ENCODE measurements at regions of chrX and their contacts with region 1.

Region 1: DNA sequence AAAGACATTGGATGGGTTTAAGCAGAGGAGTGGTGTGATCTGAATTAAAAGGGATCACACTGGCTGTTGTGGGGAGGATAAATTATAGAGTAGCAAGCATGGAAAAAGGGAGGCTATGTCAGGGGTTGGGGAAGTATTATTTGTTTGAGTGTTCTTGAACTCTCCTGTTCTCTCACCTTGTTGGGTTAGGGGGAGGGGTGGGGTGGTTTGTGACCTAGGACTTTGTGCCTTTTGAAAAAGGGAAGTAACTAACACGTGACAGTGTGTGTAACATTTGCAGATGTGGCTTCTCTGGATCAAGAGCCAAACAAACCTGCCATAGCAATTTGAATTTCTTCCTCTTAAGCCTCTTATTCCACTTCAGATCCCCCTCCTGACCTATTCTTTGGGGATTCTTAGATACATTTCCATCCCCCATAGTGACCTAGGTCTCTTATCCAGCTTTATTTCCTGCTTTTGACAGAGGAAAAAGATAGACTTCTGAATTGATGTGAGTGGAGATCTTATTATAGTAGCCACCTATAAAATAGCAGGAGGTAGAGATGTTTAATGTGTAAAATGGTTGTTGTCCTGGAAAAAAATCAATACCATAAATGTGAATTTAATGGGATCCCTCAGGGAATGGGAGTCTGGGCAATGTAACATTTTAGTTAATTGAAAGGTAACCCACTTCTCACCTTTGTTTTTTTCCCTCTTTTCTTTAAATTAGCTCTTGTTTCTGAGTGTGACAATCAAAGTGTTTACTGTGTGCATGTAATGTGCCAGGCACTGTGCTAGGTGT is 120.4 kb downstream of the CT47B1 start:
- DNase-seq: peak; percentile 82
- ATAC-seq: peak; percentile 79
- H3K4me3 ChIP-seq: peak overlapping the region in 1 of 5 experiments; percentile 13
- H3K4me3 Mint-ChIP-seq: peak overlapping the region; percentile 47
- H3K27ac ChIP-seq: peak overlapping the region; percentile 87 to 88
- H3K27ac Mint-ChIP-seq: peak overlapping the region; percentile 86
- H3K4me1 ChIP-seq: peaks cover 82 to 83% of the 10 kb centered on the region in 2 donors
- H3K4me1 Mint-ChIP-seq: peaks cover 89% of the 10 kb centered on the region
- H3K27me3 ChIP-seq: no peaks in the 10 kb centered on the region
- H3K27me3 Mint-ChIP-seq: no peaks in the 10 kb centered on the region
- CTCF ChIP-seq: no peak

Region 2: DNA sequence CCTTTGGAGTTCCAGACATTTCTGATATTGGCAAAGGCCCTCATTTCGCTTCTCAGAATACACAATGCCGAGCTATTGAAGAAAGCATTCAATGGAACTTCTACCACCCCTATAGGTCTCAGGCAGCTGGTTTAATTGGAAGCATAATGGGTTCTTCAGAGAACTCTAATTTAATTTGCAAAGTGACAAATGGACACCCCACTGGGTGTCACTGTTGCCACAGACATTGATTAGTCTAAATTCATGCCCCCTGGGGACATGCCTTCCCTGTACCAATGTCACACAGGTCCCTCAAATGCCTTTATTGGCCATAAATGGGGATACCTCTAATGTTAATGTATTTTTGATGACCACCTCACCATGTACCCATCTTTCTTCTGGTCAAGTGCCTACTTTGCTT is 421.1 kb before region 1 on chrX:
- CTCF ChIA-PET with region 1: no interaction called
- POLR2A ChIA-PET with region 1: no interaction called
- intact Hi-C with region 1: no loop called
- DNase-seq: no peak
- ATAC-seq: no peak
- H3K4me3 ChIP-seq: no peak overlapping the region
- H3K4me3 Mint-ChIP-seq: no peak overlapping the region
- H3K27ac ChIP-seq: no peak overlapping the region
- H3K27ac Mint-ChIP-seq: no peak overlapping the region
- H3K4me1 ChIP-seq: no peaks in the 10 kb centered on the region
- H3K4me1 Mint-ChIP-seq: no peaks in the 10 kb centered on the region
- H3K27me3 ChIP-seq: no peaks in the 10 kb centered on the region
- H3K27me3 Mint-ChIP-seq: peaks cover 14% of the 10 kb centered on the region
- CTCF ChIP-seq: no peak

Region 3: GRCh38 chrX:120603707-120604360 is 151.4 kb before region 1 on chrX and contains the start of gene MCTS1:
- CTCF ChIA-PET with region 1: interaction called, 3 read pairs
- POLR2A ChIA-PET with region 1: no interaction called
- intact Hi-C with region 1: loop called (anchors 2 kb)
- DNase-seq: peak; percentile 88
- ATAC-seq: peak; percentile 93
- H3K4me3 ChIP-seq: peak within 1 kb of the TSS; percentile 68 to 88 (median 70)
- H3K4me3 Mint-ChIP-seq: peak within 1 kb of the TSS; percentile 90
- H3K27ac ChIP-seq: peak within 1 kb of the TSS; percentile 78 to 94
- H3K27ac Mint-ChIP-seq: peak within 1 kb of the TSS; percentile 94
- H3K4me1 ChIP-seq: peaks cover 10% of the 10 kb centered on the region in 2 donors
- H3K4me1 Mint-ChIP-seq: peaks cover 13% of the 10 kb centered on the region
- H3K27me3 ChIP-seq: no peaks in the 10 kb centered on the region
- H3K27me3 Mint-ChIP-seq: no peaks in the 10 kb centered on the region
- CTCF ChIP-seq: no peak
- total RNA-seq, gene MCTS1: 25.5 and 27.9 TPM in 2 replicates

Region 4: DNA sequence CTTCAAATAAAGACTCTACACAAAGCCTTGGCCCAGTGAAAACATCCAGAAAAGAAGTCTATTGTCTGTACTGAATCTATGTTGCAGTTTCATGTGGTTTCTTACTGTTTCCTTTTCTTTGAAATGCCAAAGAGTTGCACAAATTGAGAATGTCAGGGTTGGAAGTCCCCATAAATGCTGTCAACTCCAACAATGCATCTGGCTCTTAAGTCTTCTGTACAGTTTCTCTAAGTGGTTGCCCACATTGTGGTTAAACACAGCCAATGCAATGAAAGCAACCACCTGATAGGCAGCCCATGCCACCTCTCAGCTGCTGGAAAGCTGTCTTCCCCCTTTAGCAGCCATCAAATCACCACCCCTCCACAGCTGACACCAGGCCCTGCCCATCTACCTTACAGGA is 58.2 kb before region 1 on chrX:
- CTCF ChIA-PET with region 1: no interaction called
- POLR2A ChIA-PET with region 1: no interaction called
- intact Hi-C with region 1: loop called (anchors 10 kb)
- DNase-seq: no peak
- ATAC-seq: no peak
- H3K4me3 ChIP-seq: no peak overlapping the region
- H3K4me3 Mint-ChIP-seq: no peak overlapping the region
- H3K27ac ChIP-seq: no peak overlapping the region
- H3K27ac Mint-ChIP-seq: no peak overlapping the region
- H3K4me1 ChIP-seq: no peaks in the 10 kb centered on the region
- H3K4me1 Mint-ChIP-seq: peaks cover 2% of the 10 kb centered on the region
- H3K27me3 ChIP-seq: no peaks in the 10 kb centered on the region
- H3K27me3 Mint-ChIP-seq: no peaks in the 10 kb centered on the region
- CTCF ChIP-seq: no peak

Region 5: GRCh38 chrX:120726294-120726693 is 29.0 kb before region 1 on chrX:
- CTCF ChIA-PET with region 1: interaction called, 10 read pairs
- POLR2A ChIA-PET with region 1: interaction called, 5 read pairs
- intact Hi-C with region 1: loop called (anchors 2 kb)
- DNase-seq: peak; percentile 71
- ATAC-seq: peak; percentile 95
- H3K4me3 ChIP-seq: no peak overlapping the region
- H3K4me3 Mint-ChIP-seq: peak overlapping the region; percentile 46
- H3K27ac ChIP-seq: peak overlapping the region; percentile 43 to 55
- H3K27ac Mint-ChIP-seq: peak overlapping the region; percentile 59
- H3K4me1 ChIP-seq: peaks cover 22 to 23% of the 10 kb centered on the region in 2 donors
- H3K4me1 Mint-ChIP-seq: peaks cover 27% of the 10 kb centered on the region
- H3K27me3 ChIP-seq: no peaks in the 10 kb centered on the region
- H3K27me3 Mint-ChIP-seq: no peaks in the 10 kb centered on the region
- CTCF ChIP-seq: no peak

Region 6: GRCh38 chrX:120797188-120797851 is 42.1 kb after region 1 on chrX:
- CTCF ChIA-PET with region 1: no interaction called
- POLR2A ChIA-PET with region 1: no interaction called
- intact Hi-C with region 1: no loop called
- DNase-seq: no peak
- ATAC-seq: no peak
- H3K4me3 ChIP-seq: no peak overlapping the region
- H3K4me3 Mint-ChIP-seq: no peak overlapping the region
- H3K27ac ChIP-seq: no peak overlapping the region
- H3K27ac Mint-ChIP-seq: no peak overlapping the region
- H3K4me1 ChIP-seq: no peaks in the 10 kb centered on the region
- H3K4me1 Mint-ChIP-seq: no peaks in the 10 kb centered on the region
- H3K27me3 ChIP-seq: no peaks in the 10 kb centered on the region
- H3K27me3 Mint-ChIP-seq: no peaks in the 10 kb centered on the region
- CTCF ChIP-seq: no peak